GM23248 (cell line): ENCODE measurements at regions of chr5 and their contacts with region 1.

Region 1: GRCh38 chr5:66312291-66312690 is 168.2 kb downstream of the SREK1 start:
- DNase-seq: no peak
- H3K4me3 ChIP-seq: no peak overlapping the region
- H3K27ac ChIP-seq: no peak overlapping the region
- H3K4me1 ChIP-seq: no peaks in the 10 kb centered on the region
- H3K27me3 ChIP-seq: no peaks in the 10 kb centered on the region; the same call in 1 of the 2 replicates

Region 2: GRCh38 chr5:66361070-66361469 is 48.8 kb after region 1 on chr5:
- in situ Hi-C with region 1: no loop called
- DNase-seq: no peak
- H3K4me3 ChIP-seq: no peak overlapping the region
- H3K27ac ChIP-seq: no peak overlapping the region
- H3K4me1 ChIP-seq: peaks cover 6% of the 10 kb centered on the region; the same call in 1 of the 2 replicates
- H3K27me3 ChIP-seq: peaks cover 32% of the 10 kb centered on the region

Region 3: DNA sequence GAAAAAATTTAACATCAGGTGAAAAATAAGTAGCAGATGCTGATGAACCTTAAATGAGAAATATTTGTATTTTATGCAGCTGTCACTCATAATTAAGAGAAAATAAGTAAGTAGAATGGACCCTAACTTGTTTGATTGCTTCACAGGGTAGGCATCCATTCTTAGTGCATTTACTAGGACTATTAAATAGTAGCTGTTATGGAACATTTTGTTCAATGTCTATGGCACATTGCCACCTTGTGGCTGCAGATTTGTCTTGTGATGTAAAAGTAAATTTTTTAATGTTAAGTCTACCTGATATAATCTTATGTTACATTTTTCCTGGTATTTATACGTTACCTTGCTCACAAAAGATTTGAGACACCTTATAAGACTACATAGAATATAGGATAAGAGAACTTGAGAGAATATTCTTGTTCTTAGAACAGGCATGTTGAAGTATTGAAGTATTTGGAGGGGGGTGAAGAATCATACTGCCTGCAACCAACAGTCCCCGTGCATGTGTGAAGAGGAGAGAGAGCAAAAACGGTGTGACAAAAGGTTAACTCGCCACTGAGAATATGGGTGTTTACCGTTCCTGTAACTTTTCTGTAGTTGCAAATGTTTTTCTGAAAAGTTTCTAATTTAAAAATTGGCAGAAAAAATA is 445.0 kb after region 1 on chr5:
- in situ Hi-C with region 1: loop called (anchors 10 kb)
- DNase-seq: peak; percentile 81
- H3K4me3 ChIP-seq: no peak overlapping the region
- H3K27ac ChIP-seq: no peak overlapping the region
- H3K4me1 ChIP-seq: no peaks in the 10 kb centered on the region
- H3K27me3 ChIP-seq: no peaks in the 10 kb centered on the region